ENCODE measurements at regions of chr1 and their contacts with region 1.

Region 1: DNA sequence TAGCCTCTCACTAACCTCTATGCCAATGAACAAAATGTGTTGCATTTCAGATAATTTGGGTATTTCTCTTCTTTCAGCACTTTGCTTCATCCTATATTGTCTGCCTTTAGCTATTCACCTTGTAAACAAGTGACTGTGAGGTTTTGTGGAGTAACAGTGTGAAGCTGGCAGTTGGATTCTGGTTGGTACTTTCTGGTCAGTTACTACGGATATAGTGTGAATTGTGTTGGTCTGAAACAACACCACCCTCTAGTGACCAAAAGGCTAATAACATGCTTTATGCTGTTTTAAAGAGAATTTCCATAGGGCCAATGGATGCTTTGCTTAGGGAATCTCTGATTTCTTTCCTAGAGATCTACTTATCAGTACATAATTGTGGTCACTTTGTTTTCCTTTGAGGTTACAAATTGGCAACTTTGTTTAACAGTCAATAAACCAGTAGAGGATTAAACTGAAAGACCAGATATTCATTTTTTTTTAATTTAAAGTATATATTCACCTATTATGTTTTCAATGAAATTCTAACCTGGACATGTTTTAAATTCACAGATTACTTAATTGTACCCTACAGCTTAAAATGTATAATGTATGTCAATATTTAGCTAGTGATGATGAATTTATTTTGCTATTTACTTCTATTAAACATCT is 2.5 kb upstream of the PTGER3 start:
- DNase-seq: peak; percentile 16 to 48
- H3K4me3 ChIP-seq: no peak overlapping the region
- H3K27ac ChIP-seq: no peak overlapping the region
- H3K4me1 ChIP-seq: no peaks in the 10 kb centered on the region
- H3K27me3 ChIP-seq: no peaks in the 10 kb centered on the region
- CTCF ChIP-seq: peak; percentile 91

Region 2: DNA sequence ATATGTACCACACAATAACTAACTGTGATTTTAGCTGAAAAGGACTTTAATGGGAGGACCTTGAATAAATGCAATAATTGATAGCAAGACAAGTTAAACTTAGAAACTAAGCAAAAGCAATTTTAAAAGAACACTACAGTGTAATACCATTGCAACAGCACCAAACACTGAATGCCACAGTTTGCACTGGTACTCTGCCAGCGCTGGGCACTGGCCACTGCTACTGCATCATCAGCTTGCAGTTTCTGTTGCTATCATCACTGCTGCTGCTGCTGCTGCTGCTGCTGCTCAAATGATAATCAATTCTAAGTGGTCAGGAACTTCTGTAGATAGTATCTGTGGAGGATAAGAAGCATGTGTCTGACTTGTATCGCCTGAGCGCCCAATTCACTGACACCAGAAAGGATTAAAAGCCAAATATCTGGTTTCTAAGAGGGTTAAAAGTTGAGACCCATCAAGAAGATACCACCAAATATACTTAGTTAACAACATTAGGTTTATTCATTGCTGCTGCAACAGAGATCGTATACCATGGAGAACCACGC is 1151.6 kb before region 1 on chr1:
- CTCF ChIA-PET with region 1: no interaction called
- POLR2A ChIA-PET with region 1: no interaction called
- intact Hi-C with region 1: loop called (anchors 5 kb)
- DNase-seq: no peak
- H3K4me3 ChIP-seq: no peak overlapping the region
- H3K27ac ChIP-seq: no peak overlapping the region
- H3K4me1 ChIP-seq: no peaks in the 10 kb centered on the region
- H3K27me3 ChIP-seq: no peaks in the 10 kb centered on the region
- CTCF ChIP-seq: no peak

Region 3: GRCh38 chr1:70528590-70529333 is 521.3 kb before region 1 on chr1:
- CTCF ChIA-PET with region 1: interaction called, 3 read pairs
- POLR2A ChIA-PET with region 1: no interaction called
- intact Hi-C with region 1: loop called (anchors 1 kb)
- DNase-seq: peak in 1 of 2 experiments; percentile 7
- H3K4me3 ChIP-seq: no peak overlapping the region
- H3K27ac ChIP-seq: no peak overlapping the region
- H3K4me1 ChIP-seq: no peaks in the 10 kb centered on the region
- H3K27me3 ChIP-seq: no peaks in the 10 kb centered on the region
- CTCF ChIP-seq: peak; percentile 59

Region 4: DNA sequence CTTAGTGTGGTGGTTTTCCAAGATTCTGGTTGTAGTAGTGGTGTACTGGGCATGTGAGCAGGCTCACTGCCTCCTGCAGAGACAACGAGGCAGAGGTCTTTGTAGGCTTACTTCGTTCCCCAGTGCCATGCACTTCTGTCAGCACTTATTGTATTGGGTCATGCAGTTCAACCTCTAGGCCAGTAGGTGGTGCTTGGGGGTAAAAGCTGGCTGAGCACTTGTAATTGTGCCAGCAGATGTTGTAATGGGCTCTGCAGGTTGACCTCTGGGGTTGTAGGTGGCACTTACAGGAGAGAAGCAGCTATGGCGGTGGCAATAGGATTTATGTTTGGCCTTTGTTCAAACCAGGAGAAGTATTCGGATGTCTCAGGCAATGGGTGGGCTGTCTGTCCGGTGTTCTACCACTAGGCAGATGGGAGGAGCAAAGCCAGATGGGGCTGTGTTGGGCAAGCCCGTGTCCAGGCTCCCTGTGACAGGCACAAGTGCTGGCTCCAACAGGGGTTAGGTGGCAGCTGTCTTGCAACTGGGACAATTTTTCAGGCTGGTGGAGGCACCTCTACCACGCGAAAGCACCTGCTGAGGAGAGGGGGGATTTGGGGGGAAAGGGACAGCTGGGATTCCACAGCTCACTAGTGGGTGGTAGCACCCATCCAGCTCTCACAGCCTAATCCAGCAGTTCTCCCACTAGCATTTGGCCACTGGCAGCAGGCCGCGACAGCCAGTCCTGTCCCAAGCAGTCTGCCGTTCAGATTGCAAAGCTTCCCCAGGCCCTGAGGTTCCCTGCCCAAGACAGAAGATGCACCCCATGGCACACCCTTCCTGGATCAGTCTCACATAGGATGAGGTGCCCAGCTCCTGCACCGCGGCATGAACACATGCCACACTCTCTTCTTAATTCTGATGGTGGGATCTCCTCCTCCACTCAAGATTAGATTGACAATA is 364.5 kb before region 1 on chr1:
- CTCF ChIA-PET with region 1: no interaction called
- POLR2A ChIA-PET with region 1: no interaction called
- intact Hi-C with region 1: loop called (anchors 5 kb)
- DNase-seq: peak in 1 of 2 experiments; percentile 25
- H3K4me3 ChIP-seq: no peak overlapping the region
- H3K27ac ChIP-seq: no peak overlapping the region
- H3K4me1 ChIP-seq: no peaks in the 10 kb centered on the region
- H3K27me3 ChIP-seq: no peaks in the 10 kb centered on the region
- CTCF ChIP-seq: peak; percentile 84

Region 5: DNA sequence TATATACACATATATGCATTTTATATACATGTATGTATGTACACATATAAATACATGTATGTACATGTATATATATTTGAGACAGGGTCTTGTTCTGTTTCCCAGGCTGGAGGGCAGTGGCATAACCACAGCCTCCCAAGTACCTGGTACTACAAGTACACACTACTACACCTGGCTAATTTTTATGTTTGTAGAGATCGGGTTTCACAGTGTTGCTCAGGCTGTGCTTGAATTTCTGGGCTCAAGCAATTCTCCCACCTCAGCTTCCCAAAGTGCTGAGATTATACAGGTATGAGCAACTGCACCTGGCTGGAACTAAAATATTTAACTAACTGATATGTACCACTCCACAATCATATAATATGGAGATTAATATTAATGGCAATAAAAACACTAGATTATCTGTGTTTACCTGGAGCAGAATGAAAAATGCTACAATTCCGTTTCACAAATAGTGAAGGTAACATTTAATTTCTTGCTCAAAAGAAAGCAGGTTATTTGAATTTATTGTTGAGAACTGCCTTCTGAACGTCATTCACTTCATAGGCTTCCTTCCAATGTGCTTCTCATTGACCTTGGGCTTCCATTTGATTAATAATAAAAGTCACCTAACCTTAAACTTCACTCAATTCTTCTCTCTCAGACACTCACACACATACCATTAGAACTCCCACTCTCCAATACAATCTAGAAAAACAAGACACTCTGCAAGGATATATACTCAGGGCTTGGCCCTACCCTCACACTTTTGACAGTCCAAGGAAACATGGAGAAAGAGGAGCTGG is 59.4 kb before region 1 on chr1:
- CTCF ChIA-PET with region 1: interaction called, 14 read pairs
- POLR2A ChIA-PET with region 1: no interaction called
- intact Hi-C with region 1: no loop called
- DNase-seq: no peak
- H3K4me3 ChIP-seq: no peak overlapping the region
- H3K27ac ChIP-seq: no peak overlapping the region
- H3K4me1 ChIP-seq: no peaks in the 10 kb centered on the region
- H3K27me3 ChIP-seq: no peaks in the 10 kb centered on the region
- CTCF ChIP-seq: no peak